K562 (cell line): ENCODE measurements at regions of chr11 and their contacts with region 1.

Region 1: DNA sequence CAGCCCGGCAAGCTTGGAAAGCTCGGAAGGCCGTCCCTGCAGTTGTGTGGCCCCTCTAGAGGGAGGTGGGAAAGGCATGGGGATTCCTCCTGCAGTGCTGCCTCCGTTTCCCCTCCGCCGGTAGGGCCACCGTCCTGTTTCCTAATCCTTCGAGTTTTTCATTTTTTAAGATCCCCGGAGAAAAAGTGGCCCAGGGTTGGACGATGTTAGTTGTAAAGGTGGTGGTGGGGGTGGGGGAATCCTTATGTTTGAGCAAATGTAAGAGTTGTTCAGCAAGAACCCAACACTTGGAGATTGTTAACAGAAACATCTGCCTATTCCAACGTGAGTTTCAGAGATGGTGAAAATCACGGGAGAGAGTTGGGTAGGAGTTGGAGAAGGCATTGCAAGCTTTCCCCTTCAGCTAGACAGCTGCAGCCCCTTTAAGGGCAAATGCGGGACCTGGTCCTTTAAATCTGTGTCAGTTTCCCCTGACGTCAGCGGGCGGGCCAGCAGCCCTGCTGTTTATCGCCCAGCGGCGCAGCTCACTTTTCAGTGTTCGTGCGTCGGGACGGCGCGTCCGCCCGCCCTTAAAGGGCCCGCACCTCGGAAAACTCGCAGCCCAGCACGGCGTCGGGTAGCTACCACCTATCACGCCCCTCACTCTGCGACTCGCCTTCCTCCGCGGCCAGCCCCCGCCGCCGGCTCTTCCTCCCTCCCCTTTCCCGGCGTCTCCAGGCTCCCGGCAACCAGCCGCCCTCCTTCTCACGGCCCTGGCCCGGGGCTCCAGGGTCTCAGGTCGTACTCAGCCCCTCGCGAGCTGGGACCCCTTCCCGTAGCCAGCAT is at the start of gene SIDT2:
- DNase-seq: peak; percentile 86 to 95 (median 88)
- ATAC-seq: peak; percentile 94
- H3K4me3 ChIP-seq: peak within 1 kb of the TSS; percentile 49
- H3K27ac ChIP-seq: peak within 1 kb of the TSS; percentile 70
- H3K4me1 ChIP-seq: peaks cover 30 to 46% of the 10 kb centered on the region in 2 experiments
- H3K27me3 ChIP-seq: no peaks in the 10 kb centered on the region
- CTCF ChIP-seq: peak in 1 of 3 experiments; percentile 7; a peak in 1 of 6 replicates
- EP300 ChIP-seq: no peak
- POLR2A ChIP-seq: peak; percentile 62
- RAD21 ChIP-seq: no peak
- polyA plus RNA-seq, gene SIDT2: 2.4 to 3.6 TPM

Region 2: DNA sequence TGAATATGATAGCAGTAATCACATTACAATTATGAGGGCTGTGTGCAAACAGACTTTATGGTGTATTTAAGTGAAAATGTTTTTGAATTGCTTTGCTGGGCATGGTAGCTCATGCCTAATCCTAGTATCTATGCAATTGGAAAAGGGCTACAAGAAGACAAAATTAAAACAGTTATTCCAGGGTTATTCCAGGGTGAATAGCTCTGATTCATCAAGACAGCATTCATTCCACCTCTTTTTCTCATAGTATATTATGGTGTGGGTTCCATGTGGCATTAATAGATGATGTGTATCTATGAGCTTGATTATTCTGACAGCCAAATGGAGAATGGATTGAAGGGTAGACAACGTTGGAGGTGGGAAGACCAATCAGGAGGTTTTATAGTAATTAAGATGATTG is 11.9 kb before region 1 on chr11:
- CTCF ChIA-PET with region 1: no interaction called
- POLR2A ChIA-PET with region 1: interaction called, 27 read pairs
- in situ Hi-C with region 1: no loop called
- intact Hi-C with region 1: no loop called
- DNase-seq: no peak
- ATAC-seq: no peak
- H3K4me3 ChIP-seq: no peak overlapping the region
- H3K27ac ChIP-seq: no peak overlapping the region
- H3K4me1 ChIP-seq: peaks cover 4 to 10% of the 10 kb centered on the region in 2 experiments; a peak in 4 of 5 replicates
- H3K27me3 ChIP-seq: no peaks in the 10 kb centered on the region
- CTCF ChIP-seq: no peak
- EP300 ChIP-seq: no peak
- POLR2A ChIP-seq: no peak
- RAD21 ChIP-seq: no peak